ENCODE measurements at regions of chr10 and their contacts with region 1.

Region 1: DNA sequence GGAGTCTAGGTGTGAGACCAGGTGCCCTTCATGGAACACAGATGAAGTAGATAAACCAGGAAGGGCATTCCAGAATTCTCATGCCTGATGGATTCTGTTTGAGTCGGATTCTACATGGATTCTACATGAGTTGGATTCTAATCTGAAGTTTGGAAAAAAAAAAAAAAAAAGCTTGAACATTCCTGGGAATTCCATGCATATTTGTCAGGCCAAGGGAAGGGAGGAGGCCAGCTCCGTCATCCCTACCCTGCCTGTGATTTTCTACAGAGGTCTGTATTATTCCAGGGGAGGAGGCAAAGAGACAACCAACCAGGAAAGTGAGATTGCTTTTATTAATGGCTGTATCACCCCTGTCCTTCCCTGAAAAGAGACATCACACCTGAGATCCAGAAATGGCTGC is 27.8 kb upstream of the EBLN1 start:
- DNase-seq: no peak
- H3K4me3 Mint-ChIP-seq: no peak overlapping the region
- H3K27ac Mint-ChIP-seq: peak overlapping the region; percentile 59
- H3K4me1 Mint-ChIP-seq: peaks cover 42% of the 10 kb centered on the region
- H3K27me3 Mint-ChIP-seq: peaks cover 3% of the 10 kb centered on the region

Region 2: DNA sequence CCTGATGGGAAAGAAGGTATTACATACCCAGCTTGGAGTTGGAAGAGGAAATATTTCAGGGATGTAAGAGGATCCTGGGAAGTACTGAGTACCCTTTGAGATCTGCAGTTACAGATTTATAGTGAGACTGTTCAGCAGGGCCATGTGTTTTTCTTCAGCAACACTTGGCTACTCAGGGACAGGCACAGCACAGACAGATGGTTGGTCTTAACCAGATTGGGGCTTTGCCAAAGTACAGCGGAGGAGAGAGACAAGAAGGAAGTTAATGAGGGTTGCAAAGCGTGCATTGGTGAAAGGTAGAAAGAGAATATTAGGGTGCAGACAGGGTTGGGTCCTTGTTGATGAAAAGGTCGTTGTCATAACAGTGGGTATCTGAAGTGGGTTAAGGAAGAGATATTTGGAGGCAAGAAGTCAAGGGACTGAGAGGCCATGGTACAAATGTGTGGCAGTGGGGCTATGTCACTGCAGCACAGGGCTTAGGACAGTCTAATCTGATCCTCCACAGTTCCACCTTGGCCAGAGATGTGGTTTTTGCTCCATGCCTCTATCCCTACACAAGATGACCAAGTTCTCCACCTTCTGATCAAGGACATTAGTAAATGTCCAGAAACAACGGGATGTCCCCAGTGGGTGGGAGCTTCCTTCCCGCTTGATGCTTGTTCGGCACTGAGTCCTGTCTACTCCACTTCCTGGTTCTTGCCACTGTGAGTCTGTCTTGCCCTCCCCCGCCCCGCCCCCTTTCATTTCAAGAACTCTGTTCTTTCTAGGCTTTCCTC is 223.1 kb before region 1 on chr10:
- intact Hi-C with region 1: loop called (anchors 1 kb)
- DNase-seq: no peak
- H3K4me3 Mint-ChIP-seq: peak overlapping the region; percentile 38
- H3K27ac Mint-ChIP-seq: peak overlapping the region; percentile 72
- H3K4me1 Mint-ChIP-seq: peaks cover 12% of the 10 kb centered on the region
- H3K27me3 Mint-ChIP-seq: peaks cover 19% of the 10 kb centered on the region

Region 3: DNA sequence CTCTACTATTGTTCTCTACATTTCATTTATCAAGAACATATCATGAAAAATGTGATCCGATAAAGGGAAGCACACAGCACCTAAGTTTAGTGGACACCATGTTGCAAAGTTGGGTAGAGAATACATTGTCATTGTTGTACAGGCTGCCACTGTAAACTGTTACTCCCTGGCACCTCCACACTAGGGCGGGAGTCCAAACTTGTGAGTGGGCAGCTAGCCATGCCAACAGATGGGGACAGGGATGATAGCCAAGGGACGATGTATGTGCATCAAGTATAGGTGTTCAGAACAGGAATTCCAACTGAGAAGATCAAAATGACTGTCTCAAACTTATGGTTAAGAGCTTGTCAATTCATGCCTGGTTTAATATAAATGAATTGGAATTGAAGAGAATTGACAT is 39.6 kb after region 1 on chr10:
- intact Hi-C with region 1: no loop called
- DNase-seq: no peak
- H3K4me3 Mint-ChIP-seq: no peak overlapping the region
- H3K27ac Mint-ChIP-seq: no peak overlapping the region
- H3K4me1 Mint-ChIP-seq: no peaks in the 10 kb centered on the region
- H3K27me3 Mint-ChIP-seq: peaks cover 18% of the 10 kb centered on the region

Region 4: GRCh38 chr10:22308390-22308789 is 62.8 kb after region 1 on chr10:
- intact Hi-C with region 1: loop called (anchors 1 kb)
- DNase-seq: peak; percentile 34
- H3K4me3 Mint-ChIP-seq: no peak overlapping the region
- H3K27ac Mint-ChIP-seq: no peak overlapping the region
- H3K4me1 Mint-ChIP-seq: peaks cover 17% of the 10 kb centered on the region
- H3K27me3 Mint-ChIP-seq: no peaks in the 10 kb centered on the region

Region 5: GRCh38 chr10:22369434-22370072 is 124.0 kb after region 1 on chr10:
- intact Hi-C with region 1: loop called (anchors 1 kb)
- DNase-seq: no peak
- H3K4me3 Mint-ChIP-seq: no peak overlapping the region
- H3K27ac Mint-ChIP-seq: no peak overlapping the region
- H3K4me1 Mint-ChIP-seq: peaks cover 42% of the 10 kb centered on the region
- H3K27me3 Mint-ChIP-seq: no peaks in the 10 kb centered on the region

Region 6: GRCh38 chr10:22630234-22631174 is 384.9 kb after region 1 on chr10:
- intact Hi-C with region 1: no loop called
- DNase-seq: peak; percentile 41
- H3K4me3 Mint-ChIP-seq: peak overlapping the region; percentile 70
- H3K27ac Mint-ChIP-seq: peak overlapping the region; percentile 95
- H3K4me1 Mint-ChIP-seq: peaks cover 87% of the 10 kb centered on the region
- H3K27me3 Mint-ChIP-seq: no peaks in the 10 kb centered on the region

Measured in activated T-helper 2 cell treated with anti-CD3 and anti-CD28 coated beads, Interferon-gamma antibody, Interleukin-2, Interleukin-4, amounts not matched to agents 10 μg/mL and 5 μg/mL and 100 μg/mL, durations not matched to agents 14 hours and 24 hours and 36 hours (primary cell).